ENCODE measurements at regions of chr11 and their contacts with region 1.

Region 1: GRCh38 chr11:15327786-15328231 is 213.1 kb downstream of the INSC start:
- DNase-seq: peak; percentile 81

Region 2: GRCh38 chr11:14435717-14436512 is 891.9 kb before region 1 on chr11:
- intact Hi-C with region 1: no loop called
- DNase-seq: no peak

Region 3: DNA sequence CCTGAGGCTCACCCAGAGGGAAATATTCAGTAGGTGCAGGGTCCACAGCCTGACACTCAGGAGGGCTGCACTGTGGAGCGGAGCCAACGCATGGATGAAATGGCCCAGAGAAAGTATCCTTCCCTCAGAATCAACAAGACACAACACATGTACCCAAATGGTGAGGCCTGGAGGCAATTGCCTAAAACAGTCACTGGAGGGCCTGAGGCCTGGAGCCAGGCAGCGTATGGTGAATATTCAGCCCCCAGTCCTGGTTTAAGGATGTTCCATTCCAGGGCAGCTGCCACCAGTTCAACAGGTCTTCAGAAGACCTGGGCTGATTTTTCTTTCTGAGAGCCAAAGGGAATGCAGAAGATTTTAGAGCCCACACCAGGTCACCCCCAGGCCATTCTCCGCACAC is 51.7 kb after region 1 on chr11:
- intact Hi-C with region 1: no loop called
- DNase-seq: no peak

Region 4: GRCh38 chr11:16613512-16614381 is 1285.9 kb after region 1 on chr11:
- intact Hi-C with region 1: loop called in 1 of 2 experiments (anchors 10 kb)
- DNase-seq: peak; percentile 96